ENCODE measurements at regions of chr1 and their contacts with region 1.

Region 1: GRCh38 chr1:109112652-109113285 is 1.1 kb upstream of the ELAPOR1 start:
- DNase-seq: peak; percentile 93
- H3K4me3 ChIP-seq: peak overlapping the region; percentile 37 to 57
- H3K27ac ChIP-seq: no peak overlapping the region
- H3K4me1 ChIP-seq: peaks cover 4 to 13% of the 10 kb centered on the region in 2 experiments; a peak in 1 of 4 replicates
- H3K27me3 ChIP-seq: peaks cover 16% of the 10 kb centered on the region
- CTCF ChIP-seq: peak; percentile 96
- EP300 ChIP-seq: no peak
- RAD21 ChIP-seq: peak; percentile 74

Region 2: DNA sequence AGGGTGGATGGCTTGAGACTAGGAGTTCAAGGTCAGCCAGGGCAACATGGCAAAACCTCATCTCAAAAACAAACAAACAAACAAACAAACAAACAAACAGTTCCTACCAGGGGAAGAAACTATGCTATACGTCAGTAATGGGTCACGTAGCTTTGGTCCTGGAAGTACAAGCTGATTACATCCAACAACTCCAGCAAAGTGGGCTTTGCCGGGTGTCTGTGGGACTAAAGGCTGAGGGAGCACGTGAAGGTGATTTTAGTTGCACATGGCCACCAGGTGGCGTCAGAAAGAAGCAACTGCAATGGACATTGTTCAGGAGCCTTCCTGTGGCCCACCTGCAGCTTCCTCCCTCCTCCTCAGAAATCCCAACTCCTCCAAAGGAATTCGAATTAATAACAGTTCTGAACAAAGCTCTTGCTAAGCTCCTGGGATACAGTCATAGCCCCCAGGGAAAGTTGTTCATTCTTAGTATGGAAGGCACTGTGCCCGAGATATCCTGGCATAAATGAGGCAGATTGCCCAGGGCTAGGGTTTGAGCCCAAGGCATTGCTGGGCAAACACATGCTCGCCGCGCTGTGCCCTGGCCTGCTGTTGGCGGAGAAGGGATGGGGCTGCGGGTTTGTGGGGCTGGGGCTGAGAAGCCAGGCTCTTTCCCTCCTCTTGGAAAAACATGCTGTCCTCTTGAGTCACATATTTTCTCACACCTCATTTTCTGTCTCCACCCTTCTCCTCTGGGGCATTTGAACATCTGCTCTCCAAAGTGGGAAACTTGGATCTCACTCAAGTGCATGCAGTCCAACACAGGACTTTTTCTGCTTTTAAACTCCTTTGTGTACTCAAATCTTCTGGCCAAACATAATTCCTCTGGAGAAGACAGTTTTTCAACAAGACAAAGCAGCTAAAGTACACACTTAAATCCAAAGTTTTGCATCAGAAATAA is 284.5 kb before region 1 on chr1:
- CTCF ChIA-PET with region 1: interaction called, 10 read pairs
- POLR2A ChIA-PET with region 1: no interaction called
- DNase-seq: peak; percentile 56
- H3K4me3 ChIP-seq: no peak overlapping the region; a peak in 1 of 4 replicates
- H3K27ac ChIP-seq: peak overlapping the region in 1 of 2 experiments; percentile 93; a peak in 2 of 4 replicates
- H3K4me1 ChIP-seq: peaks cover 9 to 20% of the 10 kb centered on the region in 2 experiments; a peak in 3 of 4 replicates
- H3K27me3 ChIP-seq: no peaks in the 10 kb centered on the region
- CTCF ChIP-seq: peak; percentile 61
- EP300 ChIP-seq: no peak
- RAD21 ChIP-seq: peak; percentile 64

Region 3: DNA sequence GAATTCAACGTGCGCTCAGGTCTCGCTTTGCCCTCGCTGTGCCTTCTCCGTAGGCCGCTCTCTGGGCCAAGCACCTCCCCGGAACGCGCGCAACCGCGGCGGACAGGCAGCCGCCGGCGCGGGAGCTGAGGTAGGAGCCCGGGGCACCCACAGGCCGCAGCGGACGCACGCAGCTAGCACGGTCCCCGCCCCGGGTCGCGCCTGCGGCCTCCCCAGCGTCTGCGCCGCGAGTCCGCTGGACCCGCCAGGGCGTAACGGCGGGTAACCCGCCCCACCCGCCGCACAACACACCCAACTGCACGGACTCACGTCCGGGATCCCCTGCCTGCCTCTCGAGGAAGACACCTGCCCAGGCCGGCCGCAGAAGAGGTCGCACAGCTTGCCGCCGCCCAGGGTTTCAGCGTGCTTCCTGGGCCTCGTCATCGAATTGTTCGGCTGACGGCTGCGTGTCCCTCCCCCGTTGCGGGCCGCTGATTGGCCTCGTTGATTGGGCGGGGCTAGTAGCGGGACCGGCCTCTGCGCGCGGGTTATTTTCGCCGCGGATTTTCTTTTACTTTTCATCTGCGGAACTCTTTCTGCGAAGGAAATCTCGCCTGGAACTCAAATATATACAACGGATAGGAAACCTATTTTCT is 149.6 kb before region 1 on chr1 and contains the start of gene CLCC1:
- CTCF ChIA-PET with region 1: interaction called, 11 read pairs
- POLR2A ChIA-PET with region 1: no interaction called
- DNase-seq: peak; percentile 94
- H3K4me3 ChIP-seq: peak within 1 kb of the TSS; percentile 62 to 97
- H3K27ac ChIP-seq: peak within 1 kb of the TSS; percentile 71 to 89
- H3K4me1 ChIP-seq: peaks cover 4 to 6% of the 10 kb centered on the region in 2 experiments; a peak in 3 of 4 replicates
- H3K27me3 ChIP-seq: no peaks in the 10 kb centered on the region
- CTCF ChIP-seq: no peak
- EP300 ChIP-seq: no peak; a peak in 1 of 4 replicates
- RAD21 ChIP-seq: no peak
- polyA plus RNA-seq, gene CLCC1: 20.0 and 27.0 TPM in 2 replicates

Region 4: GRCh38 chr1:109067883-109068282 is 44.9 kb before region 1 on chr1:
- CTCF ChIA-PET with region 1: interaction called, 11 read pairs
- POLR2A ChIA-PET with region 1: no interaction called
- DNase-seq: no peak
- H3K4me3 ChIP-seq: no peak overlapping the region
- H3K27ac ChIP-seq: no peak overlapping the region
- H3K4me1 ChIP-seq: no peaks in the 10 kb centered on the region
- H3K27me3 ChIP-seq: no peaks in the 10 kb centered on the region
- CTCF ChIP-seq: no peak
- EP300 ChIP-seq: no peak
- RAD21 ChIP-seq: no peak

Region 5: DNA sequence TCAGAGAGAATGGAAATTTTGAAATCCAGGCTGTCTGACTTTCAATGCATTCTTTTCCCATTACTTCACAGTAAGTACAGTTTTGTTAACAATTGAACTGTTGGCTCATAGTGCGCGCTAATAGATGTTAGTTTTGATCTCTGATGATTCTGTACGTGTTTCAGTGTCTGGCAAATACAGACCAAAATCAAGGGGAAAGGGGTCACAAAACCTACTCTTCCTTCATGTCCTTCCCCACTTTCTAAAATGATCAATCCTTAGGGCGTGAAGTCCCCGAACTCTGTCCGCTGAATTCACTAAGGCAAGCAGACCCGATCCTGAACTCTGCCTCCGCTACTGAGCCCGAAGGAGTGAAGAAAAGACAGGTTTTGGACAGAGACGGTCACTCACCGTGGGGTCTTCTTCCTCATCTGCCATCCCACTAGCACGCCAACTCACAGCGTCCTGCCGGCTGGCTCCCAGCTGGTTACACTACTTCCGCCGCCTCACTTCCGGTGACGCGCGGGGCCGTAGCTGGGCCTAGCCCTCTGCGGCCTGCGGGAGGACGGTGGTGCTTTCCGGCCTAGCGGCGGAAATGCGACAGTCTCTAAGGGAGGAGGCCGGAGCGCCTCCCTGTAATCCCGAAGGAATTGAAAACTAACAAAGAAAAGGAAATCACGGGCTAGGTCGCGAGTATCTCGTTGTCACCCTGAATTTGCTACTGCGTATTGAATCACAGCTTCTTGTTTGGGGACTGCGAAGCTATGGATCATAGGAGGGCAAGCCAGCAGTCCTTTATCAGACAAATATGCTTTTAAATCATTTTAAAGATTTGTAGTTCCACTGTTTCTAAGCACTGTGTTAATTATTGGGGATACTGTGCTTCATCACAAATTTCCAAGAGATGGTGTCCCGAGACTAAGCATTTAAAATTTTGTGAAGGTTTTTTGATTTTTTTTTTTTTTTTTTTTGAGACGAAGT is 37.0 kb before region 1 on chr1 and contains the start of gene TAF13:
- CTCF ChIA-PET with region 1: interaction called, 18 read pairs
- POLR2A ChIA-PET with region 1: interaction called, 3 read pairs
- DNase-seq: peak; percentile 96
- H3K4me3 ChIP-seq: peak within 1 kb of the TSS; percentile 81 to 83
- H3K27ac ChIP-seq: peak within 1 kb of the TSS; percentile 95 to 97
- H3K4me1 ChIP-seq: no peaks in the 10 kb centered on the region; a peak in 2 of 4 replicates
- H3K27me3 ChIP-seq: no peaks in the 10 kb centered on the region
- CTCF ChIP-seq: peak; percentile 22
- EP300 ChIP-seq: peak in 1 of 2 experiments; percentile 19; a peak in 1 of 4 replicates
- RAD21 ChIP-seq: no peak
- polyA plus RNA-seq, gene TAF13: 16.0 and 21.9 TPM in 2 replicates

Region 6: DNA sequence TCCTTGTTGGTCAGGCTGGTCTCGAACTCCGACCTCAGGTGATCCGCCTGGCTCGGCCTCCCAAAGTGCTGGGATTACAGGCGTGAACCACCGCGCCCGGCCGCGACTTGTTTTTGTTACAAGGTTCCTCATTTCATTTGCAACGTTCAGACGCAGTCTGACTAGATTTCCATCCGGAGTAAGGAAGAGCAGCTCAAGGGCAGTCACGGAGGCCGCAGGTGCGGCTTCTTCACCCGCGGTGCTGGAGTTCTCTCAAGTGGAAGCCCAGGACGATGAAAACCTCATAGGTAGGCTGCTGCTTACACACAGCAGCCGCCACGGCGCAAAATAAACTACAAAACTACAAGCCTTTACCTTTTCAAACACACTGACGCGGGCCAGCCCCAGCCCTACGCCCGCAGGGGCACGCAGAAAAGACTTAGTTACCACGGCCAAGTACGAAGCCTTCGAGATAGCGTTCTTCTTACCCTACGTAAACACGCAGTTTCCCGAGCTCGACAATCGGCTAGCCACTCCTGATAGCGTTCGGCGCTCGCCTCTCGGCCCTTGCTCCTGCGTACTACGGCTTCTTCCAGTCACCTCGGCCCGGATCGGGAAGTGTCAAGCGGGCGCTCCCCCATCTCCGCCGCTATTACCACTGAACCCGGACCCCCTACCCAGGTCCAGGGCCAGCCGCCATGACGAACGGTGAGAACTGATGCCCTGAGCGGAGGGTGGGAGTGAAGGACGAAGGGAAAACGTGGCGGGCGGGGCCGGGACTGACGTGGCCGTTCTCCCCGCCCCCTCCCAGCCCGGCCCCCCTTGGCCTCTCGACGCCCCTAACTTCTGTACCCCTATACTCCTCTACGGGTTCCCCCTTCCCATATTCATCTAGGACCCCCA is 22.3 kb before region 1 on chr1 and contains the start of gene TMEM167B:
- CTCF ChIA-PET with region 1: interaction called, 20 read pairs
- POLR2A ChIA-PET with region 1: no interaction called
- DNase-seq: peak; percentile 87
- H3K4me3 ChIP-seq: peak within 1 kb of the TSS; percentile 77 to 98
- H3K27ac ChIP-seq: peak within 1 kb of the TSS; percentile 93 to 95
- H3K4me1 ChIP-seq: peaks cover 4 to 5% of the 10 kb centered on the region in 2 experiments; a peak in 2 of 4 replicates
- H3K27me3 ChIP-seq: no peaks in the 10 kb centered on the region
- CTCF ChIP-seq: no peak
- EP300 ChIP-seq: no peak
- RAD21 ChIP-seq: no peak
- polyA plus RNA-seq, gene TMEM167B: 12.7 and 15.1 TPM in 2 replicates

Region 7: GRCh38 chr1:109133815-109134214 is 21.0 kb after region 1 on chr1:
- CTCF ChIA-PET with region 1: interaction called, 16 read pairs
- POLR2A ChIA-PET with region 1: interaction called, 4 read pairs
- DNase-seq: no peak
- H3K4me3 ChIP-seq: no peak overlapping the region
- H3K27ac ChIP-seq: no peak overlapping the region
- H3K4me1 ChIP-seq: peaks cover 0 to 8% of the 10 kb centered on the region in 2 experiments; a peak in 2 of 4 replicates
- H3K27me3 ChIP-seq: no peaks in the 10 kb centered on the region
- CTCF ChIP-seq: no peak
- EP300 ChIP-seq: no peak
- RAD21 ChIP-seq: no peak

Region 8: GRCh38 chr1:109357616-109358015 is 244.8 kb after region 1 on chr1:
- CTCF ChIA-PET with region 1: no interaction called
- POLR2A ChIA-PET with region 1: no interaction called
- DNase-seq: no peak
- H3K4me3 ChIP-seq: no peak overlapping the region
- H3K27ac ChIP-seq: no peak overlapping the region
- H3K4me1 ChIP-seq: peaks cover 3 to 7% of the 10 kb centered on the region in 2 experiments; a peak in 2 of 4 replicates
- H3K27me3 ChIP-seq: no peaks in the 10 kb centered on the region
- CTCF ChIP-seq: no peak
- EP300 ChIP-seq: no peak
- RAD21 ChIP-seq: no peak